H1 (cell line): ENCODE measurements at regions of chr7 and their contacts with region 1.

Region 1: GRCh38 chr7:139645572-139646523 is 122.4 kb downstream of the CLEC2L start:
- DNase-seq: peak; percentile 47 to 92
- H3K4me3 ChIP-seq: no peak overlapping the region
- H3K27ac ChIP-seq: no peak overlapping the region
- H3K4me1 ChIP-seq: peaks cover 7 to 12% (median 9%) of the 10 kb centered on the region in 4 experiments
- H3K27me3 ChIP-seq: no peaks in the 10 kb centered on the region
- CTCF ChIP-seq: peak; percentile 68 to 91 (median 88)
- EP300 ChIP-seq: no peak
- POLR2A ChIP-seq: no peak
- RAD21 ChIP-seq: peak; percentile 97 to 98

Region 2: DNA sequence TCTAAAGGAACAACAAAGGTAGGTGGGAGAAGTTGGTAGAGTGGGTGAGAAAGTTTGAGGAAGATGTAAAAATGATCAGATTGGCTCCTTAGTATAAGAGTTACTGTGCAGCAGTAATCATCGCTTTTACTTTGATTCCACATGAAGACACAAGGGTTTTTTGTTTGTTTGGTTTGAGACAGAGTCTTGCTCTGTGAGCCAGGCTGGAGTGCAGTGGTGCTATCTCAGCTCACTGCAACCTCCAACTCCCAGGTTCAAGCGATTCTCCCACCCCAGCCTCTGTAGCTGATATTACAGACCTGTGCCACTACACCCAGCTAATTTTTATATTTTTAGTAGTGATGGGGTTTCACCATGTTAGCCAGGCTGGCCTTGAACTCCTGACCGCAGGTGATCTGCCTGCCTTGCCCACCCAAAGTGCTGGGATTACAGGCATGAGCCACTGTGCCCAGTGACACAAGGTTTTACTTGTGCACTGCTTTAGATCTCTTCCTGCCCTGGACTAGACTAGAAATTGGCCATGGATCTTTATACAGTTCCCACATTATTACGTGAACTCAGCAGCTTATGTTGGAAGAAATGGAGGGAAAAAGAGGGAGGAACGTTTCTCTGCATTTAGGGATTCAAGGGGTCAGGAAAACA is 275.4 kb before region 1 on chr7:
- CTCF ChIA-PET with region 1: no interaction called
- POLR2A ChIA-PET with region 1: no interaction called
- DNase-seq: no peak
- H3K4me3 ChIP-seq: no peak overlapping the region
- H3K27ac ChIP-seq: peak overlapping the region; percentile 0; the same call in 1 of the 2 replicates
- H3K4me1 ChIP-seq: peaks cover 0 to 9% (median 2%) of the 10 kb centered on the region in 4 experiments; a peak in 3 of 7 replicates
- H3K27me3 ChIP-seq: no peaks in the 10 kb centered on the region
- CTCF ChIP-seq: no peak
- EP300 ChIP-seq: no peak
- POLR2A ChIP-seq: 0 out of 3 replicates have a peak, but pooled peaks of 1 of the 2 experiments have one; percentile 13
- RAD21 ChIP-seq: no peak

Region 3: DNA sequence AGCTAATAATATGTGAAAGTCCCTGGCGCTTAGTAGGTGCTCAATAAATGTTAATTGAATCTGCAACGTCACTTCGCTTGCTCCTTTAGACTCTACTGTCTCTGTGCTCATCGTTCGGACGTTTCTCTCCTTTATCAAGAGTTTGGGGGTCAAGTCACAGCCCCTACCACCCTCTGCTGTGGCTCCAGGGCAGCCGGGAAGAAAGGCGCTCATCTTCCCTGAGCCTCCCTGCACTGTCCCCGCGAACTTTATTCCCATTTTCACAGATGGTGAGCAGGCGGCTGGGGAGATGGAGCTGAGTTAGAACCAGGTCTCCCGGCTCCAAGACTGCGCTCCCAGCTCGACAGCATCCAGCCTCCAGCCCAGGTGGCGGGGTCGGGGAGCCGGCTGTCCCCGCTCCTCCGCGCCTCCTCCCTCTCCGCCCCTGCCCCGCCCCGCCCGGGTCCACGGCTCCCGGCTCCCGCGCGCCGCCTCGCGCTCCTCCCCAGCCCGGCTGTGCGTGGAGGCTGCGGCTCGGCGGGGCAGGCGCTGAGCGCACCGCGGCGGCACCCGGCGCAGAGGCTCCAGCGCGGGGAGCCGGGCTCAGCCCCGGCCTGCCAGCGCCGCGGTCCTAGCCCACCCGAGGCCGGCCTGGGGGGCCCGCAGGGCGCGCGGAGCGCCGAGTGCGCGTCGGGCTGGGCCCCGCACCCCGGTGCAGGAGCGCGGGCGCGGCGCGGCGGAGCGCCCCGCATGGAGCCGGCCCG is 122.5 kb before region 1 on chr7 and contains the start of gene CLEC2L:
- CTCF ChIA-PET with region 1: no interaction called
- POLR2A ChIA-PET with region 1: no interaction called
- DNase-seq: peak in 1 of 2 experiments; percentile 61
- H3K4me3 ChIP-seq: peak within 1 kb of the TSS; percentile 43 to 69 (median 49)
- H3K27ac ChIP-seq: no peak within 1 kb of the TSS
- H3K4me1 ChIP-seq: peaks cover 0 to 7% (median 0%) of the 10 kb centered on the region in 4 experiments; a peak in 2 of 7 replicates
- H3K27me3 ChIP-seq: peaks cover 20 to 47% (median 37%) of the 10 kb centered on the region in 4 experiments
- CTCF ChIP-seq: no peak
- EP300 ChIP-seq: no peak
- POLR2A ChIP-seq: no peak
- RAD21 ChIP-seq: no peak
- total RNA-seq, gene CLEC2L: 0.20 TPM in 1 of 2 replicates, not detected in the other

Region 4: DNA sequence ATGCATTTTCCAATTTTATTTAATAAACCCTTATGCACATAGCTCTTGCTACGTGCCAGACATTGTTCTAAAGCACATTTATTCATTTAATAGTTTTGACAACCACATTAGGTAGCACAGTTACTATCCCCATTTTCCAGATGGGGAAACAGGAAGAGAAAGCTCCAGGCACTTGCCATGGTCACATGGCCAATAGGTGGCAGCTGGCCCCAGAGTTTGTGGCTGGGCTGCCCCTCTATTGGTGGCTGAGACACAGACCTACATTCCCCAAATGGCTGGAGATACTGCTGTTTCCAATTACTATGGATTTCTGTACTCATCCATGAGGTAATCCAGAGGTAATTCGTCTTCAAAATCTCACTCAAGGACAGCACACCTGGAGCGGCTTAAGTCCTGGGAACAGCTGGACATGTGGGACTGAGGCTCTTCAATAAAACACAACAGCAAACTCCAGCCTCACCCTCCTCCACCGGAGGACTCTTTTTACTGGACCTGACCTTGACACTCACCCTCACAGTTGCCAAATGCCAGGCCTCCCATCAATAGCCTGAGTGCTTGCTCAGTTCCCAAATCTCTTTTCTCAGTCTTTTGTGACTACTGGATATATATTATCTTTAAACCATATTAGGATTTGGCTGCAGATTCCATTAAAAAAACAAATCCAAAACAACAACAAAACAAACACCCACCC is 16.3 kb before region 1 on chr7:
- CTCF ChIA-PET with region 1: interaction called, 66 read pairs
- POLR2A ChIA-PET with region 1: interaction called, 3 read pairs
- DNase-seq: no peak
- H3K4me3 ChIP-seq: no peak overlapping the region
- H3K27ac ChIP-seq: no peak overlapping the region
- H3K4me1 ChIP-seq: peaks cover 0 to 5% (median 2%) of the 10 kb centered on the region in 4 experiments; a peak in 2 of 7 replicates
- H3K27me3 ChIP-seq: no peaks in the 10 kb centered on the region
- CTCF ChIP-seq: peak; percentile 24 to 28 (median 27); a peak in 2 of 4 replicates
- EP300 ChIP-seq: no peak
- POLR2A ChIP-seq: no peak
- RAD21 ChIP-seq: peak; percentile 29 to 54

Region 5: GRCh38 chr7:139673230-139673629 is 27.4 kb after region 1 on chr7:
- CTCF ChIA-PET with region 1: interaction called, 31 read pairs
- POLR2A ChIA-PET with region 1: no interaction called
- DNase-seq: peak in 1 of 2 experiments; percentile 34
- H3K4me3 ChIP-seq: no peak overlapping the region
- H3K27ac ChIP-seq: no peak overlapping the region
- H3K4me1 ChIP-seq: peaks cover 0 to 7% (median 3%) of the 10 kb centered on the region in 4 experiments; a peak in 2 of 7 replicates
- H3K27me3 ChIP-seq: no peaks in the 10 kb centered on the region
- CTCF ChIP-seq: peak; percentile 7 to 27 (median 20); a peak in 3 of 4 replicates
- EP300 ChIP-seq: no peak; a peak in 1 of 3 replicates
- POLR2A ChIP-seq: no peak
- RAD21 ChIP-seq: peak in 1 of 2 experiments; percentile 36; a peak in 1 of 4 replicates

Region 6: DNA sequence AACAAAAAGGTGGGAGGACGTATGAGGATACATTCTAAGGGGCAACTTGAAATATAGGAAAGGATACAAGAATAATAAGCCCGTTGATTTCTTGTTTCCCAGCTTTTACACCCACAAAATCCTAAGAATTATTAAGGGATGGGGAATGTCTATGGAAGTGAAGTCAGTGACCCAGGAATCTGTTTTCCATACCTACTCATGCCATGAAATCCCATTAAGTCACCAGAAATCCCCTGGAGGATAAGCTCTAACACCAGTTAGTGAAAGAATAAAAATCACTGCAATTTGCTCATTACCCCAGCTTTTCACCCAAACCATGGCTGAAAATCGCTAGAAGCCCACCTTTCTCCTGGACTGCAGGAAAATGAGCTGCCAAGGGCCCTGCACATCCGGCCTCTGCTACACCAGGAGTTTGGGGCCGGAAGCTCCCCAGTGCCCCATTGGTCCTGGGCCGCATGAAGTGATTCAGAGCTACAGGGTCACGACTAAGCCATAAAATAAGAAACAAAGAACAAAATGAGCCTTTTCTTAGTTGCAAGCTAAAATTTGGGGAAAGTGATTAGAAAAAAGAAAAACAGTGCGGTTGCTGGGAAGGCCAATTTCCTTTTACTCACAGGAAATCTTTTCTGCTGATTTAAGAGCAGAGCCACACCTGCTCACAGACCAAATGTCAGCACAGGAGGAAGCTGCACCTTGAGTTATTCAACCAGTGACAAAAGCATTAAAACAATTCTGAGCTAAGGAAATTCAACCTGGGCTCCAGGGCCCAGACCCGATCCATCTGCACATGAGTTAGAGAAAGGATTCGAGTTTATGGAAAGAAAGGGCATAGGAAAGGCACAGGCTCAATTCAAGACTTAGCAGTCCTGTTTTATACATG is 91.6 kb after region 1 on chr7:
- CTCF ChIA-PET with region 1: interaction called, 11 read pairs
- POLR2A ChIA-PET with region 1: no interaction called
- DNase-seq: no peak
- H3K4me3 ChIP-seq: no peak overlapping the region
- H3K27ac ChIP-seq: no peak overlapping the region
- H3K4me1 ChIP-seq: no peaks in the 10 kb centered on the region
- H3K27me3 ChIP-seq: no peaks in the 10 kb centered on the region
- CTCF ChIP-seq: no peak
- EP300 ChIP-seq: no peak
- POLR2A ChIP-seq: no peak
- RAD21 ChIP-seq: no peak

Region 7: DNA sequence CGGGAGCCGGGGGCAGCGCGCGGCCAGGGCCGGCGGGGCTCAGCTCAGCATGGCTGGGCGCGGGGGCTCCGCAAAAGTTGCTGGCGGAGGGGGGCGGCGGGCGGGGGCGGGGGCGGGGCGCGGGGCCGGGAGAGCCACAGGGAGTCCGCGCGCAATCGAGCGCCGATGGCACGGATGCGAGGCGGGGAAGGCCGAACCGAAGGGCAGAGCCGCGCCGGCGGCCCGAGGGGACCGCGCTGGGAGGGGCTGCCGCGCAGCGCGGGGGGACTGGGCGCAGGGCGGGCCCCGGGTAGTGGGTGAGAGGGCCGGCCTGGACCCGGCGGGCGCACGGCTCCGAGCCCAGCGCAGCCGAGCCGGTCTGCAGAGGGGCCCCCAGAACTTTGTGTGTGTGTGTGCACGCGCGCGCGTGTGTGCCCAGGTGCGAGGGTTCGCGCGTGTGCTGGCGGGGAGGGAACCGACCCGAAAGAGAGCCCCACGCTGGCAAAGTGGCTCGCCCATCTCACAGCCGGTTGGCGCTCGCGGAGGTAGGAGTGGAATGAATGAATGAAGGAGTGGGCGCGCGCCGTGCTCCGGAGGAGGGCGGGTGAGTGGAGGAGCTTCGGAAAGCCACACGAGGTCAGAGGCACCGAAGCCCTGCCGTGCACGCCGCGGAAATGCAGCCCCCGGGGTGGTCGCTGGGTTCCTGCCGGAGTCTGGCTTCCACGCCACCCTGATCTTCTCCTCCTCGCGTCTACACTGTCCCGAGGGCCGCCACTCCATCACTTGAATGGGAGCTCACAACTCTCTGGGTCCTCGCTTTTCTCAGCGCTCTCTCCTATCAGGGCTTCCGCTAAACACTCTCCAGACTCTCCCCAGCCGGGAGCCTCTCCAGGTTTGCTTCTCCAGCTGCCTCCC is 132.3 kb after region 1 on chr7 and contains the start of gene HIPK2:
- CTCF ChIA-PET with region 1: interaction called, 12 read pairs
- POLR2A ChIA-PET with region 1: interaction called, 4 read pairs
- DNase-seq: peak in 1 of 2 experiments; percentile 73
- H3K4me3 ChIP-seq: peak within 1 kb of the TSS; percentile 74 to 97 (median 80)
- H3K27ac ChIP-seq: no peak within 1 kb of the TSS
- H3K4me1 ChIP-seq: peaks cover 0 to 3% (median under 1%) of the 10 kb centered on the region in 4 experiments; a peak in 3 of 7 replicates
- H3K27me3 ChIP-seq: peaks cover 2 to 33% (median 18%) of the 10 kb centered on the region in 4 experiments
- CTCF ChIP-seq: no peak
- EP300 ChIP-seq: no peak
- POLR2A ChIP-seq: no peak; a peak in 1 of 3 replicates
- RAD21 ChIP-seq: no peak
- total RNA-seq, gene HIPK2: 24.3 and 24.4 TPM in 2 replicates

Region 8: GRCh38 chr7:139987691-139988516 is 342.1 kb after region 1 on chr7:
- CTCF ChIA-PET with region 1: interaction called, 15 read pairs
- POLR2A ChIA-PET with region 1: no interaction called
- DNase-seq: no peak
- H3K4me3 ChIP-seq: no peak overlapping the region
- H3K27ac ChIP-seq: no peak overlapping the region
- H3K4me1 ChIP-seq: peaks cover 0 to 9% (median 0%) of the 10 kb centered on the region in 4 experiments; a peak in 3 of 7 replicates
- H3K27me3 ChIP-seq: peaks cover 0 to 5% (median 0%) of the 10 kb centered on the region in 4 experiments; a peak in 1 of 7 replicates
- CTCF ChIP-seq: peak in 2 of 3 experiments; percentile 17 to 22; a peak in 3 of 4 replicates
- EP300 ChIP-seq: no peak
- POLR2A ChIP-seq: no peak
- RAD21 ChIP-seq: no peak